ENCODE measurements at regions of chr14 and their contacts with region 1.

Region 1: DNA sequence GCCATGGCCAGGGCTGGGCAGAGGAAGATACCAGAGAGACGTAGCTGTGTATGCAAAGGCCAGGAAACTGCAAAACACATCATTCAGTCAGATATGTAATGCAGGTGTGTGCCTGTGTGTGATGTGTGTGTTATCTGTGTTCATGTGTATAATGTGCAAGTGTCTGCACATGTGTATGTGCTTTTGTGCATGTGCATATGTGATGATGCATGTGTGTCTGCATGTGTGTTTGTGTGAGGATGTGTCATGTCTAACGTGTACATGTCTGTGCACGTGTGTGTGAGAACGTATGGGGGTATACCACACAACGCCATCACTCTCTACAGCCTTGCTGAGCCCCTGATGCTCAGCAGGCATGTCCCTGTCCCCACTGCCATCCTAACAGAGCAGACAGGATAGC is 9.7 kb downstream of the DIO3 start:
- DNase-seq: no peak
- ATAC-seq: no peak
- H3K4me3 ChIP-seq: no peak overlapping the region
- H3K4me3 Mint-ChIP-seq: no peak overlapping the region
- H3K27ac ChIP-seq: no peak overlapping the region
- H3K27ac Mint-ChIP-seq: no peak overlapping the region
- H3K4me1 ChIP-seq: no peaks in the 10 kb centered on the region
- H3K4me1 Mint-ChIP-seq: no peaks in the 10 kb centered on the region
- H3K27me3 ChIP-seq: peaks cover 9 to 25% of the 10 kb centered on the region in 2 experiments
- H3K27me3 Mint-ChIP-seq: peaks cover 22 to 42% of the 10 kb centered on the region in 2 donors

Region 2: DNA sequence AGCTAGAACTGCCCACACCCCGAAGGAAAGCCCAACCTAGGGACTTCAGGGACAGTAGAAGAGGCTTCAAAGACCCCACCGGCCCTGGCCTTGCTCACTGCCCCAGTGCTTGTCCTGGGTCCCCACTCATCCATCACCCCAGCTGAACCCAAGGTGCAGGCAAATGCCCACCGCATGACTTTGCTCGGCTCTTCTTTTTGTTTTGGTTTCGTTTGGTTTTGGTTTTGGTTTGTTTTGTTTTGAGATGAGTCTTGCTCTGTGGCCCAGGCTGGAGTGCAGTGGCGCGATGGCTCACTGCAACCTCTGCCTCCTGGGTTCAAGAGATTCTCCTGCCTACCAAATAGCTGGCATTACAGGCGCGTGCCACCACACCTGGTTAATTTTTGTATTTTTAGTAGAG is 1976.0 kb before region 1 on chr14:
- CTCF ChIA-PET with region 1: no interaction called
- POLR2A ChIA-PET with region 1: interaction called in 1 of 2 experiments, 11 read pairs
- DNase-seq: peak in 7 of 35 experiments; percentile 5 to 47 (median 10)
- ATAC-seq: peak; percentile 60 to 74 (median 63)
- H3K4me3 ChIP-seq: peak overlapping the region in 1 of 2 donors; percentile 45
- H3K4me3 Mint-ChIP-seq: peak overlapping the region; percentile 44 to 76 (median 58)
- H3K27ac ChIP-seq: peak overlapping the region; percentile 58
- H3K27ac Mint-ChIP-seq: peak overlapping the region; percentile 77 to 88
- H3K4me1 ChIP-seq: peaks cover 0 to 17% of the 10 kb centered on the region in 2 experiments
- H3K4me1 Mint-ChIP-seq: peaks cover 15 to 32% (median 24%) of the 10 kb centered on the region in 3 donors
- H3K27me3 ChIP-seq: no peaks in the 10 kb centered on the region
- H3K27me3 Mint-ChIP-seq: no peaks in the 10 kb centered on the region

Region 3: GRCh38 chr14:101601606-101602465 is 30.8 kb after region 1 on chr14:
- CTCF ChIA-PET with region 1: no interaction called
- POLR2A ChIA-PET with region 1: no interaction called
- DNase-seq: peak in 2 of 35 experiments; percentile 3 to 17
- ATAC-seq: no peak
- H3K4me3 ChIP-seq: no peak overlapping the region
- H3K4me3 Mint-ChIP-seq: no peak overlapping the region
- H3K27ac ChIP-seq: no peak overlapping the region
- H3K27ac Mint-ChIP-seq: no peak overlapping the region
- H3K4me1 ChIP-seq: peaks cover 2 to 24% of the 10 kb centered on the region in 2 experiments
- H3K4me1 Mint-ChIP-seq: peaks cover 20 to 27% (median 26%) of the 10 kb centered on the region in 3 donors
- H3K27me3 ChIP-seq: peaks cover 0 to 43% of the 10 kb centered on the region in 2 experiments
- H3K27me3 Mint-ChIP-seq: peaks cover 20 to 26% of the 10 kb centered on the region in 2 donors

Measured in T-cell (primary cell).